ENCODE measurements at regions of chr2 and their contacts with region 1.

Region 1: DNA sequence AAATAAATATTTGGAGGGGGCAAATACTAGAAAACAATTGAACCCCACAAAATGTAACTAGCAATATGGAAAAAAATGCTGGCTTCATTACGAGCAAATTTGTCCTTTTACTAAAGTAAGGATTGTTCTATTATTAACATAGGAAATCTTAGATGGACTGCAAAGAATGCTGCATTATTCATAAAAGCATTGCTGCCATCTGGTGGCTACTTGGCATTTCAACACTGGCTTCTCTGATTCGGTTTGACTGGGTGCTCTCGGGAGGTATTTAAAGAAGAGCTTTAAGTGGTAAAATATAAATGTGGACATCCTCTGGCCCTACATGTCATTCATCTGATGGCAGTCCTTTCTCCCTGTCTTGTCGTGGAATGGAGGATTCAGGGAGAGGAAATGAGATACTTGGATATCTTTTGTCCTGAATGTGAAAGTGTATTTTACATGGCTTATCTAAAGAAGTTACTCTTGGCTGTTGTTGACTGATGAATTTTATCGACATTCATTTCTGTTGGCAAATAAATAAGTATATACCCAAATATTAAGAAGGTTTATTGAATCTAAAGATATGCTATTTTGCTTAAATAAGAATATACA is 130.2 kb downstream of the ARHGAP15 start:
- DNase-seq: no peak
- H3K4me3 ChIP-seq: peak overlapping the region in 1 of 4 donors; percentile 45
- H3K27ac ChIP-seq: no peak overlapping the region
- H3K4me1 ChIP-seq: peaks cover 0 to 2% (median 0%) of the 10 kb centered on the region in 4 donors
- H3K27me3 ChIP-seq: no peaks in the 10 kb centered on the region
- CTCF ChIP-seq: peak; percentile 66 to 78 (median 73)
- EP300 ChIP-seq: no peak
- POLR2A ChIP-seq: no peak

Region 2: DNA sequence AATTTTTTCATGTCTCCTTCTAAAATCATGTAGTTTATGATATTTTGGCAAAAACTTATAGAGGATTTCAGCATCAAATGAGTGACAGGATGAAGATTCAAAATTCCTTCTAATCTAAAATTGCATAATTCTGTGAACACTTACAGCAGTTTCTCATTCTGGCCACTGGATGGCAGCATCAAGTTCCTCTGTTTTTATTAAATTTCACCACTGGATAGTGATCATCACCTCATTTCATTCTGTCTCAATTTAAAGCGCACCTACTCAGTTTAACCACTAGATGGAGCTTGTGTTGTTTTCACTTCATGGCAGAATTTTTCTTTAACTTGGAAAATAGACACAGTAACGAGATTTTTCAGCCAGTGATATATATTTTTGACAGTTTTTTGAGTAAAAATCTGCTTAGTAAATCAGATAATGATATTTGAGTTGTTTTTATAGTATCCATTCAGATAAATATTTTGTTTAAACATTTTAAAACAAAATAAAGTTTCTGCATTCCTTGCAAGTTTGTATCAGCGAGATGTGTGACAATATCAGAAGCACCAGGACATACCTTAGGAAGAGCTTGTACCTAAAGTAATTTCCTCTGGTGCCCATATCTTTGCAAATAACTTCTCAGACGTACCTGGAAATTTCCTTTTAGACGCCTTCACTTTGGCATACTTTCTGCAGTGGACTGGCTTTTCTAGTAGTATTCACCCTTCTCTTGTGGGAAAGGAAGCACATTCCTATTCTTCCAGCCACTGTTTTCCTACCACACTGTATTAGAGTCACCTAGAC is 225.0 kb before region 1 on chr2:
- intact Hi-C with region 1: loop called (anchors 2 kb)
- DNase-seq: no peak
- H3K4me3 ChIP-seq: no peak overlapping the region
- H3K27ac ChIP-seq: no peak overlapping the region
- H3K4me1 ChIP-seq: peaks cover 0 to 4% (median 0%) of the 10 kb centered on the region in 4 donors
- H3K27me3 ChIP-seq: no peaks in the 10 kb centered on the region
- CTCF ChIP-seq: peak; percentile 96 to 99 (median 99)
- EP300 ChIP-seq: no peak
- POLR2A ChIP-seq: no peak

Region 3: GRCh38 chr2:143162123-143162837 is 97.2 kb before region 1 on chr2:
- intact Hi-C with region 1: loop called (anchors 10 kb)
- DNase-seq: no peak
- H3K4me3 ChIP-seq: peak overlapping the region in 1 of 4 donors; percentile 8
- H3K27ac ChIP-seq: no peak overlapping the region
- H3K4me1 ChIP-seq: peaks cover 0 to 6% (median 2%) of the 10 kb centered on the region in 4 donors
- H3K27me3 ChIP-seq: peaks cover 0 to 8% (median 0%) of the 10 kb centered on the region in 4 donors
- CTCF ChIP-seq: peak; percentile 40 to 57 (median 45)
- EP300 ChIP-seq: no peak
- POLR2A ChIP-seq: no peak

Region 4: GRCh38 chr2:143796051-143796450 is 536.6 kb after region 1 on chr2:
- intact Hi-C with region 1: no loop called
- DNase-seq: no peak
- H3K4me3 ChIP-seq: no peak overlapping the region
- H3K27ac ChIP-seq: no peak overlapping the region
- H3K4me1 ChIP-seq: no peaks in the 10 kb centered on the region
- H3K27me3 ChIP-seq: no peaks in the 10 kb centered on the region
- CTCF ChIP-seq: no peak
- EP300 ChIP-seq: no peak
- POLR2A ChIP-seq: no peak

Measured in esophagus muscularis mucosa (tissue), 4 donors.